Stomach (tissue), 19 donors: ENCODE measurements at regions of chr11 and their contacts with region 1.

Region 1: GRCh38 chr11:2526808-2527381 is 82.1 kb downstream of the KCNQ1 start:
- DNase-seq: peak; percentile 86 to 87
- H3K4me3 ChIP-seq: peak overlapping the region in 3 of 4 donors; percentile 13 to 35 (median 23)
- H3K27ac ChIP-seq: peak overlapping the region; percentile 71 to 89 (median 80)
- H3K4me1 ChIP-seq: peaks cover 37 to 46% (median 41%) of the 10 kb centered on the region in 4 donors
- H3K27me3 ChIP-seq: peaks cover 0 to 24% (median 0%) of the 10 kb centered on the region in 3 donors
- CTCF ChIP-seq: peak in 5 of 7 experiments; percentile 15 to 67 (median 33)
- EP300 ChIP-seq: no peak
- POLR2A ChIP-seq: no peak

Region 2: DNA sequence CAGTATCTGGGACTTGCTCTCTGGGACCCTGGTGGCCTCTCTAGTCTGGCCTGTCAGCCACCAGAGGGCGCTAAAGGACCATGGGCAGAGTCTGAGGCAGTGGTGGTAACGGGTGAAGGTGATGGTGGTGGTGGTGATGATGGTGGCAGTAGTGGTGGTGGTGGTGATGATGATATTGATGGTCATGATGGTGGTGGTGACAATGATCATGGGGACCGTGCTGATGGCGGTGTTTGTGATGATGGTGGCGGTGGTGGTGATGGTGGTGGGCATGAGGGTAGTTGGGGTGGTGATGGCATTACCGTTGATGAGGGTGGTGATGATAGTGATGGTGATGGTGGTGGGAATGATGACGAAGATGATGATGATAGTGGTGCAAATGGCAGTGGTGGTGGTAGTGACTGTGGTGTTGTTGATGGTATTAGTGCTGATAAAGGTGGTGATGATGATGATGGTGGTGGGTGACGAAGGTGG is 98.5 kb before region 1 on chr11:
- intact Hi-C with region 1: loop called (anchors 5 kb)
- DNase-seq: peak; percentile 86 to 90
- H3K4me3 ChIP-seq: no peak overlapping the region
- H3K27ac ChIP-seq: no peak overlapping the region
- H3K4me1 ChIP-seq: peaks cover 0 to 18% (median 10%) of the 10 kb centered on the region in 4 donors
- H3K27me3 ChIP-seq: peaks cover 0 to 7% (median 0%) of the 10 kb centered on the region in 3 donors
- CTCF ChIP-seq: peak in 6 of 7 experiments; percentile 10 to 99 (median 90)
- EP300 ChIP-seq: no peak
- POLR2A ChIP-seq: peak in 1 of 4 donors; percentile 92